ENCODE measurements at regions of chr2 and their contacts with region 1.

Region 1: GRCh38 chr2:196076778-196077568 is 8.3 kb upstream of the DNAH7 start:
- DNase-seq: no peak
- H3K4me3 ChIP-seq: no peak overlapping the region
- H3K27ac ChIP-seq: no peak overlapping the region
- H3K4me1 ChIP-seq: no peaks in the 10 kb centered on the region
- H3K27me3 ChIP-seq: no peaks in the 10 kb centered on the region
- CTCF ChIP-seq: no peak

Region 2: GRCh38 chr2:196131384-196131937 is 54.5 kb after region 1 on chr2:
- CTCF ChIA-PET with region 1: no interaction called
- dilution Hi-C with region 1: no loop called
- in situ Hi-C with region 1: no loop called
- intact Hi-C with region 1: loop called (anchors 1 kb)
- DNase-seq: peak; percentile 35
- H3K4me3 ChIP-seq: no peak overlapping the region
- H3K27ac ChIP-seq: no peak overlapping the region
- H3K4me1 ChIP-seq: no peaks in the 10 kb centered on the region
- H3K27me3 ChIP-seq: no peaks in the 10 kb centered on the region
- CTCF ChIP-seq: peak; percentile 57 to 59

Region 3: GRCh38 chr2:196337208-196337953 is 260.4 kb after region 1 on chr2:
- CTCF ChIA-PET with region 1: no interaction called
- dilution Hi-C with region 1: no loop called
- in situ Hi-C with region 1: loop called in 1 of 2 experiments (anchors 5 kb)
- intact Hi-C with region 1: loop called (anchors 1 kb)
- DNase-seq: peak; percentile 16
- H3K4me3 ChIP-seq: no peak overlapping the region
- H3K27ac ChIP-seq: no peak overlapping the region
- H3K4me1 ChIP-seq: no peaks in the 10 kb centered on the region
- H3K27me3 ChIP-seq: peaks cover 2% of the 10 kb centered on the region
- CTCF ChIP-seq: peak; percentile 25 to 57

Region 4: GRCh38 chr2:196758474-196759377 is 681.8 kb after region 1 on chr2:
- CTCF ChIA-PET with region 1: no interaction called
- dilution Hi-C with region 1: no loop called
- in situ Hi-C with region 1: no loop called
- intact Hi-C with region 1: loop called (anchors 5 kb)
- DNase-seq: no peak
- H3K4me3 ChIP-seq: no peak overlapping the region
- H3K27ac ChIP-seq: no peak overlapping the region
- H3K4me1 ChIP-seq: no peaks in the 10 kb centered on the region
- H3K27me3 ChIP-seq: no peaks in the 10 kb centered on the region
- CTCF ChIP-seq: peak; percentile 30 to 32